Dorsolateral prefrontal cortex (tissue), 120 donors: ENCODE measurements at regions of chr7 and their contacts with region 1.

Region 1: DNA sequence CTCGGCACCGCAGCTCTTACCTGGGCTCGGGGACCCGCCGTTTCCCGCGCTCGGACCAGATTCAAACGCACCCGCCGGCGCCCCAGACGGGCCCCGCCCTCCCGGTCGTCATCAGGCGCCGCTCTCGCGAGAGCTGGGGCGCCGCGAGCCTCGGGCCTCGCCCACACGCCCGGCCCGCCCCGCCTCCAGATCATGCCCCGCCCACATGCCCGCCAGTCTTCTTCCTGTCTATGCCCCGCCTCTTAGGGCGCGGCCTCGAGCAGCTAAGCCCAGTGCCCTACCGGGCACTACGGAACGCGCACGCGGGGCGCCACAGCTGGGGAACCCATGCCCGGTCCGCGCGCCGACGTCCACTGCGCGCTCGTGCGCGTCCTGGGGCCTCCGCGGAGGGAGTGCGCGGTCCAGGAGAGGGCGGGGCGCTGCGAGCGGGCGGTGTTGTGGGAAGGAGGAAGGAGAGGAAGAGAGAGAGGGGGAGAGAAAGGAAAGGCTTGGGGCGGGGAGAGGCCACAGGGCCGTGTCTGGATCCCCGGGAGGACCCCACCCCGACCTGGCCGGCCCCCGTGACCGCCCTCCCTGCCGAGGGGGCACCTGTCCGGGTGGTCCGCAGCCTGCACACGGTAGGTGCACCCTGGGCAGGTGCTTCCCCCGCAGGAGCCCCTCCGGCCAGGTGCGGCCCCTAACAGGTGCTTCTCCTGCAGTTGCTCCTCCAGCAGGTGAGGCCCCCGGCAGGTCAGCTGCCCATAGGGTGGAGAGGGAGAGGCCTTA is at the start of gene NCAPG2:
- DNase-seq: peak; percentile 93 to 98 (median 97)
- H3K4me3 ChIP-seq: peak within 1 kb of the TSS; percentile 59 to 98 (median 91)
- H3K27ac ChIP-seq: peak within 1 kb of the TSS; percentile 40 to 95 (median 86)
- H3K27me3 ChIP-seq: no peaks in the 10 kb centered on the region
- CTCF ChIP-seq: peak in 50 of 56 donors; percentile 5 to 70 (median 38)
- total RNA-seq, gene NCAPG2: 6.9 to 19.9 (median 11.7) TPM

Region 2: DNA sequence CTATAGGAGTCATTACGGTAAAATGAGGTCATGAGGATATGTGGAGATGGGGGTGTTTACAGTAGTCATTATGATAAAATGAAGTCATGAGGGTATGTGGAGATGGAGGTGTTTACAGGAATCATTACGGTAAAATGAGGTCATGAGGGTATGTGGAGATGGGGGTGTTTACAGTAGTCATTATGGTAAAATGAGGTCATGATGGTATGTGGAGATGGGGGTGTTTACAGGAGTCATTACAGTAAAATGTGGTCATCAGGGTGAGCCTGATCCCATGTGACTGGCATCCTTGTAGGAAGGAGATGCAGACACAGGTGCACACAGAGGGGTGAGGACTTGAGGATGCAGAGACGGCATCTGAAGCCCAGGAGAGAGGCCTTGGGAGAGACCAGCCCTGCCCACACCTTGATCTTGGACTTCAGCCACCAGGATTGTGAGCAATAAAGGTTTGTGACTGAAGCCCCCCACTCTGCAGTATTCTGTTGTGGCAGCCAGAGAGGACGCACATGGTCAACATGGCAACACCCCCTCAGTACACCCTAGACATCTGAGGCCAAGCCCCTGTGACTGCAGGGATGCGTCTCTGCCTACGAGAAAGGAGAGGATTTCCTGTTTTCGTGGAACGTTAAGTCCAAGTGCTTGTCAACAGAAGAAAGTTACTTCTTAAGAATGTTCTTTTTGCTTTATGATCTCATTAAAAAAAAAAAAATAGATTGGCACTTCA is 823.7 kb before region 1 on chr7:
- intact Hi-C with region 1: no loop called
- DNase-seq: no peak
- H3K4me3 ChIP-seq: no peak overlapping the region
- H3K27ac ChIP-seq: no peak overlapping the region
- H3K27me3 ChIP-seq: no peaks in the 10 kb centered on the region
- CTCF ChIP-seq: no peak

Region 3: DNA sequence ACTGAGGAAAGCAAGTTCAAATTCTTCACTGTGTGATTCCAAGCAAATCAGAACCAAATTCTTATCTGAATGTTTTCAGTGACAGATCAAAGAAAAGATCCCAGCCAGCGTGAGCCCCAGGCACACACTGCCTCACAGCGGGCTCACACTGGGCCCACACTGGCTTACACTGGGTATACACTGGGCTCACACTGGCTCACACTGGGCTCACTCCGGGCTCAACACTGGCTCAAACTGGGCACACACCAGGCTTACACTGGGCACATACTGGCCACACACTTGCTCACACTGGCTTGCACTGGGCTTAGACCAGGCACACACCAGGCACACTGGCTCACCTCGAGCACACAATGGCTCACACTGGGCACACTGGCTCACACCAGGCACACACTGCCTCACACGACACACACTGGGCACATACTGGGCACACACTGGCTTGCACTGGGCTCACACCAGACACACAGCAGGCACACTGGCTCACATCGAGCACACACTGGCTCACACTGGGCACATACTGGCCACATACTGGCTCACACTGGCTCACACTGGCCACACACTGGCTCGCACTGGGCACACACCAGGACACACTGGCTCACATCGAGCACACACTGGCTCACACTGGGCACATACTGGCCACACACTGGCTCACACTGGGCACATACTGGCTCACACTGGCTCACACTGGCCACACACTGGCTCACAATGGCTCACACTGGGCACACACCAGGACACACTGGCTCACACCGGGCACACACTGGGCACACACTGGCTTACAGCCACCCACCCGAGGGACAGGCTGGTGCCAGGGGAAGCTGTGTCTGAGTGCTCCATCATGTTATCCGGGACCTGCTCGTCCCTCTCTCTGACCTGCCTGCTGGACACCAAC is 273.6 kb before region 1 on chr7:
- intact Hi-C with region 1: no loop called
- DNase-seq: peak in 1 of 10 donors; percentile 5
- H3K4me3 ChIP-seq: no peak overlapping the region
- H3K27ac ChIP-seq: no peak overlapping the region
- H3K27me3 ChIP-seq: no peaks in the 10 kb centered on the region
- CTCF ChIP-seq: no peak

Region 4: GRCh38 chr7:158541346-158542010 is 163.4 kb before region 1 on chr7:
- intact Hi-C with region 1: no loop called
- DNase-seq: peak in 7 of 10 donors; percentile 37 to 83 (median 57)
- H3K4me3 ChIP-seq: no peak overlapping the region
- H3K27ac ChIP-seq: peak overlapping the region in 15 of 59 donors; percentile 1 to 71 (median 24)
- H3K27me3 ChIP-seq: no peaks in the 10 kb centered on the region
- CTCF ChIP-seq: no peak

Region 5: GRCh38 chr7:158829342-158830210 is 124.7 kb after region 1 on chr7 and contains the start of gene ESYT2:
- intact Hi-C with region 1: loop called (anchors 2 kb)
- DNase-seq: peak; percentile 95 to 100 (median 98)
- H3K4me3 ChIP-seq: peak within 1 kb of the TSS; percentile 66 to 99 (median 88)
- H3K27ac ChIP-seq: peak within 1 kb of the TSS; percentile 61 to 100 (median 97)
- H3K27me3 ChIP-seq: no peaks in the 10 kb centered on the region
- CTCF ChIP-seq: peak in 34 of 56 donors; percentile 4 to 55 (median 22)
- total RNA-seq, gene ESYT2: 40.3 to 83.9 (median 56.3) TPM

Region 6: DNA sequence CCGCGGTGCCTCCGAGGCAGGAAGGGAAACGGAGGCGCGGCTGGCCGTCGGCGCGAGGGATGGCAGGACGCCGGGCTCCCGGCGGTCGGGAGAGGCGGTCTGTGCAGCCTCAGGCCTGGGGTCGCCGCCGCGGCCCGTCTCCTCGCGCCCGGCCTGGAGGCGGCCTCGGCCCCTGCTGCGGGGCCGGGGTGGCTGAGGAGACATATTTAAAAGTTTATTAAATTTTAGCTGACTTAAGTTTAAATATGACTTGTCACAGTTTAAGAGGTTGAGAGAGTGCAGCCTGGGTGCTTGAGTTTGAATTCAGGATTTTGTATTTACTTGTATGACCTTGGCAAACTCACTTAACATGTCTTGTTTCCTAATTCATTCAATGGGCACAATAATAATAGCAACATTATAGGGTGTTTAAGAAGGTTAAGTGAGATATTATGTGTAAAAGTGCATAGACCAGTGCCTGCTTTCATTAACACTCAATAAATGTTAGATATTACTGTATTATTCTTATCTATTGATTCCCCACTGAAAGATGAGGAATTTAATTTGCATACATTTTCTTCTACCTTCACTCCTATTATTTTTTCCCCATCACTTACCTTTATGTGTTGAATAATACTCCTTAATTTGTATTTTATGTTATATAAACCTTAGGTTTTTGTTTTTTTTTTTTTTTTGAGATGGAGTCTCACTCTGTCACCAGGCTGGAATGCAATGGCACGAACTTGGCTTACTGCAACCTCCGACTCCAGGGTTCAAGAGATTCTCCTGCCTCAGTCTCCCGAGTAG is 152.2 kb after region 1 on chr7:
- intact Hi-C with region 1: loop called (anchors 1 to 10 kb)
- DNase-seq: no peak
- H3K4me3 ChIP-seq: peak overlapping the region; percentile 66 to 99 (median 90)
- H3K27ac ChIP-seq: peak overlapping the region in 58 of 59 donors; percentile 6 to 92 (median 82)
- H3K27me3 ChIP-seq: no peaks in the 10 kb centered on the region
- CTCF ChIP-seq: no peak

Region 7: GRCh38 chr7:158976849-158977593 is 272.1 kb after region 1 on chr7:
- intact Hi-C with region 1: loop called in 1 of 2 experiments (anchors 5 kb)
- DNase-seq: peak; percentile 17 to 87 (median 78)
- H3K4me3 ChIP-seq: peak overlapping the region in 46 of 59 donors; percentile 9 to 60 (median 38)
- H3K27ac ChIP-seq: peak overlapping the region in 20 of 59 donors; percentile 7 to 73 (median 42)
- H3K27me3 ChIP-seq: no peaks in the 10 kb centered on the region
- CTCF ChIP-seq: peak; percentile 61 to 95 (median 84)